ENCODE measurements at regions of chr14 and their contacts with region 1.

Region 1: DNA sequence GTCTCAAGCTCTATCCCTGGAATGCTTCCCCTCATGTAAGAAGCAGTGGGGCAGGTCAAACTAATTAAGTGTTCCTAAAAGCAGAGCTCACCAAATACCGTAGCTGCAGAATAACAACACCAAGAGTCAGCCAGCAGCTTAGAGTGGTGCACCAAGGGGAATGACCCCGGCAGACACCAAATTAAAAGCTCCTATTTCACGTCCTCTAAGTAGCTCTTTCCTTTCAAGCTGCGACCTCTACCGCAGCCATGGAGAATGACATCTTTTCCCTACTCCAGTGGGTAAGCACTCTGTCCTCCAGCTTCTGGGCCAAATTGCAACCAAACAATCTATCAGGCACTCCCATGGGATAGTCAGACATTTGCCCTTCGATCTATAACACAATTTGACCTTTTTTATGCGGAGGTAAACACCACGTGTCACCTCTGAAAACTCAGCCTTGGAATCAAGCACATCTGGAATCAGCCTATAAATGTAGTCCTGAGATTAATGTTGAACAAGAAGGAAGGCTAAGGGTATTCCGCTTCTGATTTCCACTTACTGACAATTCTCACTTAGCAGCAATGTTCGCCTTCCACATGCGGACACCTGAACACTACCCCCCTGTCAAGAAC is 67.6 kb upstream of the CDKN3 start:
- DNase-seq: no peak
- H3K4me3 ChIP-seq: no peak overlapping the region
- H3K27ac ChIP-seq: no peak overlapping the region
- H3K27me3 ChIP-seq: peaks cover 26% of the 10 kb centered on the region
- CTCF ChIP-seq: peak; percentile 91

Region 2: DNA sequence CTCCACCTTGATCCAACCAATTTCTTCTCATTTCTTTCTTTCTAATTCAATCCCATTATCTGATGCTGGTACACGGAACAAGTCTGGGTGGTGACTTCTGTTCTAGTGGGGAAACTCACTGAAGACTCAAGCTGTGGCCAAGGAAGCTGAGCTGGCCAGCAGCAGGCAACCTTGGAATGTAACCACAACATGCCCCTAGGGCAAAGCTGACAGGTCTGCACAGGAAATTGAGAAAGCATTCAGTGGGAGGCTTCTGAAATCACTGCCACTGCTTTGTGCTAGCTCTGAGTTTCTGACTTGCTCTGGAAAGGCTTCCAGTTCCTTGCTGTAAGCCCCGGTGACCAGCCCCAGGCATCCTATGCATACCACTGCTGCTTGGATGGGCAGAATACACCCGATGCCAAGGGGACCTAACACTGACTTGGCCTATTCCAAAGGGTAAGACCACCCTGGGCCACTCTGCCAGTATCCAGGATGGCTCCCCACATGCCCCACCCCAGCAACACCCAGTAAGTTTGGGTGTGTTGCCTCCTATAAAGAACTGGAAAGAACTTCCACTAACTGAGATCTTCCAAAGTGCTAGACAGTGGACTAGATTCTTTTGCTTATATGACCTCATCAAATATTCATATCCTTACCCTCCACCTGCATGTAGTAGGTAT is 16.9 kb before region 1 on chr14:
- CTCF ChIA-PET with region 1: interaction called, 21 read pairs
- POLR2A ChIA-PET with region 1: no interaction called
- DNase-seq: peak; percentile 39
- H3K4me3 ChIP-seq: no peak overlapping the region
- H3K27ac ChIP-seq: no peak overlapping the region
- H3K27me3 ChIP-seq: peaks cover 11% of the 10 kb centered on the region
- CTCF ChIP-seq: no peak

Region 3: GRCh38 chr14:54317391-54317790 is 11.8 kb before region 1 on chr14:
- CTCF ChIA-PET with region 1: interaction called, 21 read pairs
- POLR2A ChIA-PET with region 1: no interaction called
- DNase-seq: no peak
- H3K4me3 ChIP-seq: no peak overlapping the region
- H3K27ac ChIP-seq: no peak overlapping the region
- H3K27me3 ChIP-seq: peaks cover 13% of the 10 kb centered on the region
- CTCF ChIP-seq: no peak

Measured in AG04450 (cell line).